Caco-2 (cell line): ENCODE measurements at regions of chr20 and their contacts with region 1.

Region 1: GRCh38 chr20:25178563-25179438 is 16.7 kb upstream of the ENTPD6 start:
- DNase-seq: peak; percentile 55 to 69
- H3K4me3 ChIP-seq: no peak overlapping the region
- H3K4me3 Mint-ChIP-seq: no peak overlapping the region
- H3K27ac Mint-ChIP-seq: no peak overlapping the region
- H3K4me1 ChIP-seq: peaks cover 2% of the 10 kb centered on the region; the same call in 1 of the 2 replicates
- H3K4me1 Mint-ChIP-seq: no peaks in the 10 kb centered on the region
- H3K27me3 ChIP-seq: no peaks in the 10 kb centered on the region
- H3K27me3 Mint-ChIP-seq: no peaks in the 10 kb centered on the region
- CTCF ChIP-seq: peak; percentile 84 to 85

Region 2: GRCh38 chr20:25057234-25058050 is 121.4 kb before region 1 on chr20:
- CTCF ChIA-PET with region 1: no interaction called
- POLR2A ChIA-PET with region 1: no interaction called
- intact Hi-C with region 1: no loop called
- DNase-seq: peak; percentile 70 to 76
- H3K4me3 ChIP-seq: peak overlapping the region; percentile 77
- H3K4me3 Mint-ChIP-seq: peak overlapping the region; percentile 72
- H3K27ac Mint-ChIP-seq: peak overlapping the region; percentile 21
- H3K4me1 ChIP-seq: peaks cover 66% of the 10 kb centered on the region
- H3K4me1 Mint-ChIP-seq: peaks cover 30% of the 10 kb centered on the region
- H3K27me3 ChIP-seq: no peaks in the 10 kb centered on the region
- H3K27me3 Mint-ChIP-seq: no peaks in the 10 kb centered on the region
- CTCF ChIP-seq: peak in 1 of 2 experiments; percentile 22

Region 3: DNA sequence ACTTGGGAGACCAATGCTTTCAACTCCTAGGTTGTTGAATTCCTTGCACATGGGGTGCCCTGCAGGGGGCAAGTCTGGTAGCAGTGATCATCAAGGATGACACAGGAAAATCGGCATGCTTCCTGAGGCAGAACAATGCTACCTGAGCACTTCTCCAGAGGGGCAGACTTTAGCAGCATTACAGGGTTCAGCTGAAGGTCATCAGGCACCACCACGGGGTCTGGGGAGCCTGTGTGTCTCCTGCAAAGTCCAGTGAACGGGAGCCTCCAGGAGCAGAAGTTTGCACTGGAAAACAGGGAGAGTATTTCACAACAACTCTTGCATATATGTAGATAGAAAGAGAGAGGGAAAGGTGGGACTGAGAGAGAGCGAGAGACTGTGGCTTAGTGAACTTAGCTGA is 107.1 kb before region 1 on chr20:
- CTCF ChIA-PET with region 1: no interaction called
- POLR2A ChIA-PET with region 1: no interaction called
- intact Hi-C with region 1: loop called (anchors 1 kb)
- DNase-seq: peak in 1 of 2 experiments; percentile 25
- H3K4me3 ChIP-seq: no peak overlapping the region
- H3K4me3 Mint-ChIP-seq: no peak overlapping the region
- H3K27ac Mint-ChIP-seq: no peak overlapping the region
- H3K4me1 ChIP-seq: 0 out of 2 replicates have a peak, but pooled peaks cover 8% of the 10 kb centered on the region
- H3K4me1 Mint-ChIP-seq: peaks cover 11% of the 10 kb centered on the region
- H3K27me3 ChIP-seq: no peaks in the 10 kb centered on the region
- H3K27me3 Mint-ChIP-seq: peaks cover 2% of the 10 kb centered on the region
- CTCF ChIP-seq: no peak

Region 4: DNA sequence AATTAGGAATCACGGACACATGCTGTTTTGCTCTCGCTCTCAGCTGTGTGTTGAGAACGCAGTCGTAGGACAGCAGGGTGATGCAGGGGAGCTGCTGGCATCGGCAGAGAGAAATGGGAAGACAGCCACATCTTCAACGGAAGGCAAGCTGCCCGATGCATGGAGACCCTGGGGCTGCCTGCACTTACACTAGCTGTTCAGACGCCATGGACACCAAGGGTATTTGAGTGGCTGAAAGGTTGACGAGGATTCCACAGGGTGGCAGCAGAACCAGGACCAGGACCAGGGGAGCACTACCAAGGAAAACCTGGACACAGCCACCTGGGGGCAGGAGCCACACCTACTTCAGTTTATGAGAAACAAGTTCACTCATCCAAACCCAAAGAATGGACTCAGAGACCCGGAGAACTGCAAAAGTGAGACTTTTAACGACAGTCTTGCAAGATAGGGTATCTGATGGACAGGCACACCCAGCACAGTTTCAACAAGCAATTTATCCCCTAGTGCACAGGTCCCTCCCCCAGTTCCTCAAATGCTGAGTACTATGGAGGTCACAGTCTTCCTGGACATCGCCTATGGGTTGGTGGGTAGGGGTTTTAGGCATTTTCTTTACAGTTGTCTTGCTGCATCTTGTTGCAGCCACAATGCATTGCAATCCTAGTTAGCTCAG is 39.6 kb before region 1 on chr20:
- CTCF ChIA-PET with region 1: no interaction called
- POLR2A ChIA-PET with region 1: no interaction called
- intact Hi-C with region 1: loop called (anchors 1 kb)
- DNase-seq: peak; percentile 66 to 71
- H3K4me3 ChIP-seq: no peak overlapping the region
- H3K4me3 Mint-ChIP-seq: no peak overlapping the region
- H3K27ac Mint-ChIP-seq: no peak overlapping the region
- H3K4me1 ChIP-seq: peaks cover 10% of the 10 kb centered on the region; the same call in 1 of the 2 replicates
- H3K4me1 Mint-ChIP-seq: peaks cover 11% of the 10 kb centered on the region
- H3K27me3 ChIP-seq: no peaks in the 10 kb centered on the region
- H3K27me3 Mint-ChIP-seq: peaks cover 3% of the 10 kb centered on the region
- CTCF ChIP-seq: peak; percentile 16 to 71